ENCODE measurements at regions of chr3 and their contacts with region 1.

Region 1: DNA sequence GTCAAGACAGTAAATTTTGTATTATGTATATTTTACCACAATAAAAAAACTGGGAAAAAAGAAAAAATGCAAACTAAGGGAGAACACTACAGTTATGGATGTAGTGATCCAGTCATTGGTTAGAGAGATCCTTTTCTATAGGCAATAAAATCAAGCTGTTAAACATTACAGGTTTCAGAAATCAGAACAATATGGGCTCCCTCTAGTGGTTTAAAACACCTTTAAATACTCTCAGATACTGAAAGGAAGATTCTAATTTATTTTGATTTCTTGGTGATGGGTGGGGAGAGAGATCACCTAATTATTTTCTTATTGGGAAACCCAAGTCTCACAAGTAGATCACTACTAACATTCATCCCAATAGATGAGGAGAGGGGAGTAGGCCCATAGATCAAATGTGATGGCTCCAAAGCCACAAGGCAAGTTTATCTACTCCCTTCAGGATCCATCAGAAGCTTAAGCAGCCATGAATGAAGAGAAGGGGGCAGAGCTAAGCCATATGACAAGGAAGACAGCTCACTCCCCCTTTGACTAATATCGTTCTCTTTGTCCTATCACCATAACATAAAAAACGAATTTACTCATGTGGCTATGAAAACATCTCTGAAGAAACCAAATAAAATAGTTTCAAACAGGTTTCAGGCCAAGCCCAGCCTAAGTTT is 118.6 kb downstream of the ANO10 start:
- DNase-seq: peak; percentile 27
- ATAC-seq: no peak
- H3K4me3 ChIP-seq: no peak overlapping the region
- H3K4me3 Mint-ChIP-seq: no peak overlapping the region
- H3K27ac ChIP-seq: no peak overlapping the region
- H3K27ac Mint-ChIP-seq: no peak overlapping the region
- H3K4me1 ChIP-seq: no peaks in the 10 kb centered on the region
- H3K4me1 Mint-ChIP-seq: no peaks in the 10 kb centered on the region
- H3K27me3 ChIP-seq: no peaks in the 10 kb centered on the region
- H3K27me3 Mint-ChIP-seq: no peaks in the 10 kb centered on the region
- CTCF ChIP-seq: peak; percentile 62

Region 2: GRCh38 chr3:42961633-42962032 is 541.6 kb before region 1 on chr3:
- CTCF ChIA-PET with region 1: interaction called, 15 read pairs
- POLR2A ChIA-PET with region 1: no interaction called
- intact Hi-C with region 1: no loop called
- DNase-seq: peak; percentile 18
- ATAC-seq: no peak
- H3K4me3 ChIP-seq: no peak overlapping the region
- H3K4me3 Mint-ChIP-seq: no peak overlapping the region
- H3K27ac ChIP-seq: no peak overlapping the region
- H3K27ac Mint-ChIP-seq: no peak overlapping the region
- H3K4me1 ChIP-seq: no peaks in the 10 kb centered on the region
- H3K4me1 Mint-ChIP-seq: no peaks in the 10 kb centered on the region
- H3K27me3 ChIP-seq: no peaks in the 10 kb centered on the region
- H3K27me3 Mint-ChIP-seq: peaks cover 28% of the 10 kb centered on the region
- CTCF ChIP-seq: peak; percentile 39

Region 3: DNA sequence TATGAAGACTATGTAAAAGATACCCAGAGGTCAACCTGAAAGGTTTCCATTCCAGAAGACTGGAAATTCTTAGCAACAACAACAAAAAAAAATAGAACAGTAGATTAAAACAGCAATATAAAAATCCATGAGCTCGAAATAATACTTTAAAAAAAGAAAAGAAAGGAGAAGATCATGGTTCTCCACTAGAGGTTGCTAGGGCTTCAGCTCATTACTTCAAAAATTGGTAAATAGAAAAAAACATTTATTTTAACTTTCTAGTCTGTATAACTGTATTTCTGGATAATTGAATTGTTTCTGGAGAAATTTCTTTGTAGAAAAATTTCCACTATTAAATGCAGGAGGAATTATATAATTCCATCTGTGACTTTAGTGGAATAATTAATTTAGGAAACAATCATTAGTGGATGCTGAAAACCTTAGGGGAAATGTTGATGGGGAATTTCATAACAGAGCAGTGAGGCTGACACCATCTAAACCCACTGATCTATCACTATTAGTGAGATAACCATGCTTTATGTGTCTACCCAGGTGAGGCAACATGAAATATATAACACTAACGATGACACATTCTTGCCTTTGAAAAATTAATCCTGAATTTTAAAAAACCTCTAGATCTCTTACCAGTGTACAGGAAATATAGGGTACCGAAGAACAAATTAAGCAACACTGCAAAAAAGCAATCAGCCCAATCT is 279.4 kb before region 1 on chr3:
- CTCF ChIA-PET with region 1: interaction called, 36 read pairs
- POLR2A ChIA-PET with region 1: no interaction called
- intact Hi-C with region 1: no loop called
- DNase-seq: peak; percentile 25
- ATAC-seq: no peak
- H3K4me3 ChIP-seq: no peak overlapping the region
- H3K4me3 Mint-ChIP-seq: no peak overlapping the region
- H3K27ac ChIP-seq: no peak overlapping the region
- H3K27ac Mint-ChIP-seq: no peak overlapping the region
- H3K4me1 ChIP-seq: no peaks in the 10 kb centered on the region
- H3K4me1 Mint-ChIP-seq: no peaks in the 10 kb centered on the region
- H3K27me3 ChIP-seq: peaks cover 0 to 2% (median 0%) of the 10 kb centered on the region in 4 experiments
- H3K27me3 Mint-ChIP-seq: peaks cover 23% of the 10 kb centered on the region
- CTCF ChIP-seq: peak; percentile 77

Measured in B cell (primary cell).